Head of caudate nucleus (tissue), 42 donors: ENCODE measurements at regions of chr10 and their contacts with region 1.

Region 1: DNA sequence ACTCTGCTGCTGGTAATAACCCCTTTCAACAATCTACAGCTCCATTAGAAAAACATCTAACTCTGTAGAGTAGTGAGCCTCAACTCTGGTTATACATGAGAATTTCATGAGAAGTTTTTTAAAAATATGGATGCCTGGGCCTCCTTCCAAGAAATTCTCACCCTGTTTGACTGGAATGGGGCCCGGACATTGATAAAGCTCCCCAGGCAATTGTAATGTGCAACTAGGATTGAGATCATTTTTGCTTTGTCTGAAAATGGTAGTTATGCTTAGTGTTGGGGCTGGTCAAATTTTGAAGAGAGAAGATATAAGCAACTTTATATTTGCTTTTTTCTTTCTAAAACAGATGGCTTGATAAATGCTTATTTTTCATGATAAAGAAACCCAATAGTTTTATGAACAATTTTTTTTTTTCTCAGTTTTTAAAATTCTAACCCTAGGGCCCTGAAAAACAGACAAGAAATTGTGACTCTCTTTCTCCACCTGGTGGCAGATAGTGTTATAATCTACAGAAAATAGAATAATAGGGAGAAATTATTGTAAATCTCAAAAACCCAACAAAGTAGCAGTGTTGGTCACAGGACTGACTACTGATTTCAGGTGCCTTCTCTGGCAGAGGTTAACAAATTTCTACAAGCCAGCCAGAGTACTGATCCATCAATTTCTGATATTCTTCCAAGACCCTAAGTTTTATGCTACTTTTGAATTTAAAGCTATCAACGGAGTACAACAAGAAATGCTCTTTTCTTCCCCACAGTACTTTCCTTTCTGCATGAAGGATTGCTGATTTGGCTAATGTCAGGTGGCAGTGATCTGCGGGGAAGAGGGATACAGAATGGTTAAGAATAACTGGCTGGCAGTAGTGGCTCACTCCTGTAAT is 174.8 kb downstream of the DKK1 start:
- DNase-seq: peak in 2 of 42 donors; percentile 5 to 12

Region 2: DNA sequence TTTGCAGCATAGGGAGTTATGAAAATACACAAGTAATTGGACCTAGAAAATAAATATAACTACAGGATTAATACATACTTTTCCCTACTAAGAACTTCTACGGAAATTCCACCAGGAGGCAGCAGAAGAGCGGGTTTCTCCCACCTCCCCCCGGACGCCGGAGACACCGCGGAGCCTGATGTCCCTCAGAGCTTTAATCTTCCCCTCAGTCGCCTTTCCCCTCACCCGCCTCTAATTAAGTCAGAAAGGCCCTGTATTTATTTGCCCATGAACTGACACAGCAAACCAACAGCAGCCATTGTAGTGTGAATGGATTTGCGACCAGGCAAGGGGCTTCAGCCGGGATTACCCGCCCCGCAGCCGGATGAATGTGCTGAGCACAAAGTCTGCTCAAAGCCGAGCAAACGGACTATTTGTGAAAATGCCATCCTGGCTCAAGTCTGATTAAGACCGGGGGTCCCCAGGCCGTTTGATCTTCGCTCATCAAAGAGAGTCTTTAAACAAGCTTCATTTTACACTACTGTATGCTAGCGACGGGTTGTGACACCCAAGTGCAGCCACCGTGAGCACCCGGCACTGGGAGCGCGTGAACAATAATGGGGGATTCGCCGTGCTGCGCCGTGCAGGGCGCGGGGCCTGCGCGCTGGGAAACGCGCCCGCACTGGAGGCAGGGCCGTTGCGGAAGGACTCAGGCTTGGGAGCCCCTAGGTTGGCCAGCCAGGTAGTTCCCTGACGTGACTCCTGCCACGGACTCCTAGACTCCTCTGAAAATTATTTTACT is 180.4 kb before region 1 on chr10:
- intact Hi-C with region 1: loop called (anchors 2 kb)
- DNase-seq: peak; percentile 38 to 89 (median 74)